ENCODE measurements at regions of chr7 and their contacts with region 1.

Region 1: DNA sequence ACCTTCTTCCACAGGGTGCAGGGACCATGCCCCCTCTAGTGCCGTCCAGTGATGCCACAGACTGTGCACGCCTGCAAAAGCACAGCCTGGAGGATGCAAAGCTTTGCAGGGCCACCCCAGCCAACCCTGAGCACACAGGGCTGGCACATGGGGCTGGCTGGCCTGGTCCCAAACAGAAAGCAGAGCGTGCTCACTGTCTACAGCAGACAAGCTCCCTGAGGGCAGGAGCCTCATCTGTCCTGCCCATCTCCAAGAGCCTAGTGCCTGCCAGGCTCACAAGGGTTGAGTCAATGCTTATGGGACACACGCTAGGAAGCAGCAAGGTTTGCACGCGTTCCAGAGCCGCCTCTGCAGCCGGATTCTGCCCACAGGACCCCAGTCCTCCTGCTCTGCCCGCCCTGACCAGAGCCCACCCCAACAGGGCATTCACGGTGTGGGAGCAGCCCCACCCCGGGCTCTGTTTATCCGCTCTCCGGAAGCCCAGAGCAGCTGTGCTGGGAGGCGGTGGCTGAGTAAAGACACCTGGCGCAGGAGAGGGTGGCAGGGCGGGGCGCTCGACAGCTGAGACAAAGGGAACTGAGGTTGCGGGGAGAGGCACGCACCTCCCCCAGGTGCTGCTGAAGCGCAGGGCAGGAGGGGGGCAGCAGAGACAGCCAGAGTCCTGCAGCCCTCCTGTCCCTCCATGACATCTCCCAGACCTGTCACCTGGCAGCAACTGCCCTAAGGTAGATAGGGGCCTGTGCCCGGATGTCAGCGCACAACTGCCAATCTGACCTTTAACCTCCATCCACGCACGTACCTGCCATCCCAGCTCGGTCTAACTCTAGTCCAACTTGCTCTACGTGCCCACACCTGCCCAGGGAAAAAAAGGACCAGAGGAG is 4.3 kb downstream of the KCNH2 start:
- DNase-seq: no peak
- ATAC-seq: no peak
- H3K4me3 ChIP-seq: no peak overlapping the region
- H3K27ac ChIP-seq: no peak overlapping the region
- H3K4me1 ChIP-seq: peaks cover 11% of the 10 kb centered on the region
- H3K27me3 ChIP-seq: peaks cover 0 to 59% (median 27%) of the 10 kb centered on the region in 3 donors
- CTCF ChIP-seq: no peak

Region 2: DNA sequence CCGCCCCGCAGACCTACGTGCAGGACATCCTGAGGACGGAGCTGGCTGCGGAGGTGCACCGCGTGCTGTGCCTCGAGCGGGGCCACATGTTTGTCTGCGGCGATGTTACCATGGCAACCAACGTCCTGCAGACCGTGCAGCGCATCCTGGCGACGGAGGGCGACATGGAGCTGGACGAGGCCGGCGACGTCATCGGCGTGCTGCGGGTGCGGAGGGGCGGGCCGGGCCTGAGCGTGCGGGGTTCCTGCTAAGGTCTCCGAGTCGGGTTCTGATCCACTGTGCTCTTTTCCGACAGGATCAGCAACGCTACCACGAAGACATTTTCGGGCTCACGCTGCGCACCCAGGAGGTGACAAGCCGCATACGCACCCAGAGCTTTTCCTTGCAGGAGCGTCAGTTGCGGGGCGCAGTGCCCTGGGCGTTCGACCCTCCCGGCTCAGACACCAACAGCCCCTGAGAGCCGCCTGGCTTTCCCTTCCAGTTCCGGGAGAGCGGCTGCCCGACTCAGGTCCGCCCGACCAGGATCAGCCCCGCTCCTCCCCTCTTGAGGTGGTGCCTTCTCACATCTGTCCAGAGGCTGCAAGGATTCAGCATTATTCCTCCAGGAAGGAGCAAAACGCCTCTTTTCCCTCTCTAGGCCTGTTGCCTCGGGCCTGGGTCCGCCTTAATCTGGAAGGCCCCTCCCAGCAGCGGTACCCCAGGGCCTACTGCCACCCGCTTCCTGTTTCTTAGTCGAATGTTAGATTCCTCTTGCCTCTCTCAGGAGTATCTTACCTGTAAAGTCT is 40.1 kb after region 1 on chr7:
- intact Hi-C with region 1: loop called in 1 of 2 experiments (anchors 1 kb)
- DNase-seq: peak; percentile 70 to 84
- ATAC-seq: peak; percentile 7 to 41 (median 18)
- H3K4me3 ChIP-seq: peak overlapping the region; percentile 49
- H3K27ac ChIP-seq: no peak overlapping the region
- H3K4me1 ChIP-seq: peaks cover 8% of the 10 kb centered on the region
- H3K27me3 ChIP-seq: peaks cover 0 to 84% (median 22%) of the 10 kb centered on the region in 3 donors
- CTCF ChIP-seq: no peak